MCF 10A (cell line): ENCODE measurements at regions of chr16 and their contacts with region 1.

Region 1: GRCh38 chr16:64391063-64391600 is 730.7 kb downstream of the CDH11 start:
- DNase-seq: peak; percentile 22
- H3K4me3 Mint-ChIP-seq: no peak overlapping the region
- H3K27ac Mint-ChIP-seq: peak overlapping the region; percentile 79
- H3K4me1 Mint-ChIP-seq: peaks cover 6% of the 10 kb centered on the region
- H3K27me3 Mint-ChIP-seq: no peaks in the 10 kb centered on the region
- CTCF ChIP-seq: no peak

Region 2: GRCh38 chr16:64440421-64440831 is 49.3 kb after region 1 on chr16:
- CTCF ChIA-PET with region 1: no interaction called
- POLR2A ChIA-PET with region 1: no interaction called
- intact Hi-C with region 1: loop called (anchors 1 kb)
- DNase-seq: peak; percentile 82
- H3K4me3 Mint-ChIP-seq: no peak overlapping the region
- H3K27ac Mint-ChIP-seq: peak overlapping the region; percentile 84
- H3K4me1 Mint-ChIP-seq: peaks cover 17% of the 10 kb centered on the region
- H3K27me3 Mint-ChIP-seq: no peaks in the 10 kb centered on the region
- CTCF ChIP-seq: no peak

Region 3: GRCh38 chr16:64493709-64494108 is 102.6 kb after region 1 on chr16:
- CTCF ChIA-PET with region 1: no interaction called
- POLR2A ChIA-PET with region 1: no interaction called
- intact Hi-C with region 1: no loop called
- DNase-seq: no peak
- H3K4me3 Mint-ChIP-seq: no peak overlapping the region
- H3K27ac Mint-ChIP-seq: no peak overlapping the region
- H3K4me1 Mint-ChIP-seq: no peaks in the 10 kb centered on the region
- H3K27me3 Mint-ChIP-seq: no peaks in the 10 kb centered on the region
- CTCF ChIP-seq: no peak